Gastrocnemius medialis (tissue), 4 donors: ENCODE measurements at regions of chr1 and their contacts with region 1.

Region 1: GRCh38 chr1:223186800-223187199 is 43.8 kb upstream of the TLR5 start:
- DNase-seq: no peak
- ATAC-seq: no peak
- H3K4me3 ChIP-seq: no peak overlapping the region
- H3K27ac ChIP-seq: no peak overlapping the region
- H3K4me1 ChIP-seq: no peaks in the 10 kb centered on the region
- H3K27me3 ChIP-seq: no peaks in the 10 kb centered on the region
- CTCF ChIP-seq: no peak
- POLR2A ChIP-seq: no peak

Region 2: DNA sequence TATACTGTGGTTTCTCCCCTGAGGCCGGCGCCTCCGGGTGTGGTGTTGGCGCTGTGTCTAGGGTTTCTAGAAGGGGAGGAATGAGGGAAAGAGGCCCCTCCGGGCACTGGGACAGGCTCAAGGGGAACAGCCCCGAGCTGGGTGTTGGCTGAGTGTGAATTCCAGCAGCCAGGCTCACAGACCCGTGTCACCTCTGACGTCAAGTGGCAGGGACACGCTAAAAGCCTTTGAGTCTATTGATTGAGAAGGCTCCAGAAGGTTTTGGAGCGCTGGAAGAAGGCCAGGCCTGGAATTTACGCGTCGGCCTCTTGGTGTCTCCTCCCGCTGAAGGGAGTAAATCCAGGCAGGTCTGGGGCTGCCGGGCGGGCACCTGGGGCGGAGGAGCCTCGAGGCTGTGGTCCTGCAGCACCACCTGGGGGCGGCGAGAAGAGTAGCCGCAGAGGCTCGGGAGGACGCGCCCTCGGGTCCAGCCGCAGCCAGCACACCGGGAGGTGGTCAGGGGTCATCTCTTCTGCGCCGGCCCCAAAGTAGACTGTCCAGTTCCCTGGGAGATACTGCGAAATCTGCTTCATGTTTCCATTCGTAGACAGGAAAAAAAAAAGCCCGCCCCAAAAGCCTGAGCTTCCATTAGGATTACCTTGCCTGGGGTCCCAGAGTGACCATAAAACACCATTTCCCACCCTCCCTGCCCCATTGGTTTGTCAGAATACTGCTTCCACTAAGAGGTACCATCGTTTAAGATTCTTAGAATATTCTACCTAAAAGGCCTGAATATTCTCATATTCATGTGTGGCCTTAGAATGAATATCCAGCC is 105.4 kb before region 1 on chr1:
- in situ Hi-C with region 1: no loop called
- intact Hi-C with region 1: no loop called
- DNase-seq: peak; percentile 60 to 72
- ATAC-seq: peak; percentile 85 to 95
- H3K4me3 ChIP-seq: peak overlapping the region; percentile 36 to 77 (median 48)
- H3K27ac ChIP-seq: peak overlapping the region; percentile 29 to 61 (median 46)
- H3K4me1 ChIP-seq: no peaks in the 10 kb centered on the region
- H3K27me3 ChIP-seq: no peaks in the 10 kb centered on the region
- CTCF ChIP-seq: peak; percentile 92 to 98 (median 96)
- POLR2A ChIP-seq: no peak

Region 3: GRCh38 chr1:223144914-223145313 is 41.9 kb before region 1 on chr1:
- in situ Hi-C with region 1: no loop called
- intact Hi-C with region 1: loop called (anchors 1 kb)
- DNase-seq: no peak
- ATAC-seq: no peak
- H3K4me3 ChIP-seq: no peak overlapping the region
- H3K27ac ChIP-seq: no peak overlapping the region
- H3K4me1 ChIP-seq: peaks cover 6 to 7% of the 10 kb centered on the region in 2 donors
- H3K27me3 ChIP-seq: no peaks in the 10 kb centered on the region
- CTCF ChIP-seq: no peak
- POLR2A ChIP-seq: no peak